Stomach (tissue), 19 donors: ENCODE measurements at regions of chr9 and their contacts with region 1.

Region 1: DNA sequence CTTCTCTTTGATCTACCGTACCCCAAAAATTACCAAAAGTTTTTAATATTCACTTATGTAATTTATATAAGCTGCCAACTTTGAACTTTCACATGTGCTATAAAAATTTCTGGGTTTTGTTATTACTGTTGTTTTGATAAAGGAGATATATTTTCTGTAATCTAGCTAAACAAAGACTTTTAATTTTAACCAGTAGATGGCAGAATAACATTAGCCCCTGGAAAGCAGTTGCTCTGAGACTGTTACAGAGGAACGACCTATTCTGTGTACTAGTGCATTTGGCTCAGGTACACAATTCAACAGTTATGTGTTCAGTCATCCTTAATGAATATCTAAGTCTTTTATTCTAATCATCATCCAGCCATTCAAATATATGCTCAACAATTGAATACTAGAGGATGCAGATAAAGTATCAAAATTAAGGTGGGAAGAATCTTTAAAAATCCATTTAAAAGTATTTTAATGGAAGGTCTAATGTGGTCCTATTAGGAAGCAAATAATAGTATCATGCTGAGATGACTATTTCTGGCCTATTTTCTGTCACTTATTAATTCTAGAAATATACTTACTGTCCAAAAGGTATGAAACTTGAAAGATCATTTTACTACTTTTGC is 8.6 kb downstream of the KLHL9 start:
- DNase-seq: peak in 1 of 2 donors; percentile 66
- H3K4me3 ChIP-seq: no peak overlapping the region
- H3K27ac ChIP-seq: no peak overlapping the region
- H3K4me1 ChIP-seq: peaks cover 5 to 63% (median 34%) of the 10 kb centered on the region in 4 donors
- H3K27me3 ChIP-seq: no peaks in the 10 kb centered on the region
- CTCF ChIP-seq: peak in 4 of 7 experiments; percentile 31 to 52 (median 50)
- EP300 ChIP-seq: no peak
- POLR2A ChIP-seq: no peak

Region 2: GRCh38 chr9:21395778-21396717 is 69.4 kb after region 1 on chr9:
- intact Hi-C with region 1: loop called (anchors 10 kb)
- DNase-seq: peak; percentile 51 to 77
- H3K4me3 ChIP-seq: peak overlapping the region; percentile 39 to 63 (median 56)
- H3K27ac ChIP-seq: no peak overlapping the region
- H3K4me1 ChIP-seq: peaks cover 0 to 10% (median 9%) of the 10 kb centered on the region in 4 donors
- H3K27me3 ChIP-seq: peaks cover 0 to 87% (median 22%) of the 10 kb centered on the region in 3 donors
- CTCF ChIP-seq: peak in 5 of 7 experiments; percentile 42 to 68 (median 65)
- EP300 ChIP-seq: no peak
- POLR2A ChIP-seq: no peak

Region 3: GRCh38 chr9:21943464-21943863 is 616.8 kb after region 1 on chr9:
- intact Hi-C with region 1: no loop called
- DNase-seq: no peak
- H3K4me3 ChIP-seq: no peak overlapping the region
- H3K27ac ChIP-seq: no peak overlapping the region
- H3K4me1 ChIP-seq: no peaks in the 10 kb centered on the region
- H3K27me3 ChIP-seq: peaks cover 0 to 17% (median 0%) of the 10 kb centered on the region in 3 donors
- CTCF ChIP-seq: no peak
- EP300 ChIP-seq: no peak
- POLR2A ChIP-seq: no peak